ENCODE measurements at regions of chr4 and their contacts with region 1.

Region 1: DNA sequence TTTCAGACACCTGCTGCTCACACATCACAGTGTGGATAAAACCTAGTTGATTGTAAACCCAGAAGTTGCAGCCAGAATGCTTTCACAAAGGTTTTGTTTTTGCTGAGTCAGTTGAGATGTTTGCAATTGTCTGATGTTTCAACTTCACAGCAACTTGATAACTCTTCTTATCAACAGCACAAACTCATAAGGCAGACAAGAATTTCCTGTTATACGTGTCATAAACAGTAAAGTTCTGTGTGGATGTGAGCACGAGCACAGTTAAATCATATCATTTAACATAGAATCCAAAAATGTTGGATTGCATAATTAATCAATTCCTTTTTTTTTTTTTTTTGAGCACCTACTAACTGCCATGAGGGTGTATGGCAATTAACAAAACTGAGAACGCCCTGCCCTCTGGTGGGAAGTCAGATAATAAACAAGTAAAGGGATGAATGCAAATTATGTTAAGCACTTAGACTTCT is 512.2 kb downstream of the PDHA2 start:
- DNase-seq: peak; percentile 77
- H3K4me3 ChIP-seq: no peak overlapping the region
- H3K27ac ChIP-seq: peak overlapping the region; percentile 62
- H3K4me1 ChIP-seq: peaks cover 30% of the 10 kb centered on the region
- H3K27me3 ChIP-seq: no peaks in the 10 kb centered on the region
- CTCF ChIP-seq: peak; percentile 13 to 21
- POLR2A ChIP-seq: no peak

Region 2: GRCh38 chr4:95165926-95166524 is 1186.1 kb before region 1 on chr4:
- CTCF ChIA-PET with region 1: interaction called, 13 read pairs
- POLR2A ChIA-PET with region 1: no interaction called
- dilution Hi-C with region 1: no loop called
- intact Hi-C with region 1: loop called (anchors 1 kb)
- DNase-seq: peak; percentile 74
- H3K4me3 ChIP-seq: no peak overlapping the region
- H3K27ac ChIP-seq: no peak overlapping the region
- H3K4me1 ChIP-seq: no peaks in the 10 kb centered on the region
- H3K27me3 ChIP-seq: no peaks in the 10 kb centered on the region
- CTCF ChIP-seq: peak; percentile 31
- POLR2A ChIP-seq: no peak

Region 3: DNA sequence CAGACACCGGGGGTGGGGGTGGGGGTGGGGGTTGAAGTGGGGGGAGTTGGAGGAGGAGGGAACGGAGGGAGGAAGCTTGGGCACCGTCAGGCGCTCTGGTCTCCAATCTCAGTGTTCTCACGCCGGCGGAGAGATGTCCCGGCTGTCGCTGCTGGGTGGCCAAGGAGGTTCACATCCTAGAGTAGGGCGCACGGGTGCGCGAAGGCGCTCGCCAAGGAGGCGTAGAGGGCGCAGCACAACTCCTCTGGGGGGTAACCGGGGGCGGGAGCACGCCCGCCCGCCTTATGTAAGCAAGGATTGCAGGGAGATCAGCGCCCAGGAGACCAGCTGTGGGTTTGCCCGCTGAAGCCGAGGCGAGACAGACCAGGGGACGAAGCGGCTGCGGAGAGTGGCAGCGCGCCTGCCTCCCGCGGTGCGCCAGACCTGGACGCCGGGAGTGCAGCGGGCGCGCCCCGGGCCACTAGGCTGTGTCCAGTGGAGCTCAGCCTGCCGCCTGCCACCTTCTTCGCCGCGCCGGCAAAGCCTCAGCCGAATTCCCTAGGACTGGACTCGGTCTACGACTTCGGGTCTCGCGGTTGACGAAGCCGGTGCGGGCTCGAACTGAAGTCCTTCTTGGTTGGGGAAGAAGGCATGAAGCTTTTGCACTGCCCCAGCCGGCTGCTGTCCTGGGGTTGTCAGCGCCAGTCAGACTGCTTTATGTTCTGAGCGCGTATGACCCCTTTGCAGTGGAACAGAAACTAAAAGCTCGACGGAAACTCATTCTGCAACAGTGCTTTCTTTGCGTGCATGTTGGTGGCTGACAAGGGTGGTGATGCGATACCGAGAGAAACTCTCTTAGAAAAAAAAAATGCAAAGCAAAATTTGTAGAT is 802.6 kb before region 1 on chr4:
- CTCF ChIA-PET with region 1: no interaction called
- POLR2A ChIA-PET with region 1: no interaction called
- dilution Hi-C with region 1: no loop called
- intact Hi-C with region 1: loop called (anchors 10 kb)
- DNase-seq: peak; percentile 41
- H3K4me3 ChIP-seq: peak overlapping the region; percentile 55 to 88 (median 82)
- H3K27ac ChIP-seq: no peak overlapping the region
- H3K4me1 ChIP-seq: peaks cover 20% of the 10 kb centered on the region
- H3K27me3 ChIP-seq: peaks cover 38 to 42% of the 10 kb centered on the region in 2 experiments
- CTCF ChIP-seq: no peak
- POLR2A ChIP-seq: no peak

Region 4: GRCh38 chr4:95693594-95693993 is 658.5 kb before region 1 on chr4:
- CTCF ChIA-PET with region 1: interaction called, 14 read pairs
- POLR2A ChIA-PET with region 1: no interaction called
- dilution Hi-C with region 1: no loop called
- intact Hi-C with region 1: loop called (anchors 1 kb)
- DNase-seq: peak; percentile 36
- H3K4me3 ChIP-seq: no peak overlapping the region
- H3K27ac ChIP-seq: peak overlapping the region; percentile 88
- H3K4me1 ChIP-seq: peaks cover 14% of the 10 kb centered on the region
- H3K27me3 ChIP-seq: no peaks in the 10 kb centered on the region
- CTCF ChIP-seq: peak in 1 of 2 donors; percentile 16
- POLR2A ChIP-seq: no peak

Region 5: DNA sequence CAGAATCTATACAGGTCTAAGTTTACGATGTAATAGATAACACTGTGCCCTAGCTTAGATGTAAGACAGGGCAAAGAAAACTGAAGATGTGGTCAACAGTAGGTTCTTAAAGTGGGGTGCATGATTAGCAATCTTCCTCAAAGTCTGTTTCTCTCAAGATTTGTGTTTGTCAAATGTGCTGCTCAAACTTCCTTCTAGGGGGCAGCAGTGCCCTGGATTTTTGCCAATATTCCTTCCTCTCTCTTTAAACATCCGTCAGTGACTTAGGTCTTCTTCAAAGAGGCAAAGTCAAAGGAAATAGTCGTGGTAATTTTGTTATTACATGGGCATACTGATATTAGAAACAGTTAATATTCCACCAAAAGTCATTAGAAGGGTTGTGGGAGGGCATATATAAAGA is 516.4 kb before region 1 on chr4:
- CTCF ChIA-PET with region 1: no interaction called
- POLR2A ChIA-PET with region 1: no interaction called
- dilution Hi-C with region 1: no loop called
- intact Hi-C with region 1: loop called (anchors 5 kb)
- DNase-seq: peak; percentile 21
- H3K4me3 ChIP-seq: no peak overlapping the region
- H3K27ac ChIP-seq: no peak overlapping the region
- H3K4me1 ChIP-seq: no peaks in the 10 kb centered on the region
- H3K27me3 ChIP-seq: no peaks in the 10 kb centered on the region
- CTCF ChIP-seq: no peak
- POLR2A ChIP-seq: no peak

Region 6: GRCh38 chr4:96240041-96240440 is 112.0 kb before region 1 on chr4:
- CTCF ChIA-PET with region 1: no interaction called
- POLR2A ChIA-PET with region 1: no interaction called
- dilution Hi-C with region 1: no loop called
- intact Hi-C with region 1: no loop called
- DNase-seq: no peak
- H3K4me3 ChIP-seq: no peak overlapping the region
- H3K27ac ChIP-seq: no peak overlapping the region
- H3K4me1 ChIP-seq: no peaks in the 10 kb centered on the region
- H3K27me3 ChIP-seq: no peaks in the 10 kb centered on the region
- CTCF ChIP-seq: no peak
- POLR2A ChIP-seq: no peak

Region 7: DNA sequence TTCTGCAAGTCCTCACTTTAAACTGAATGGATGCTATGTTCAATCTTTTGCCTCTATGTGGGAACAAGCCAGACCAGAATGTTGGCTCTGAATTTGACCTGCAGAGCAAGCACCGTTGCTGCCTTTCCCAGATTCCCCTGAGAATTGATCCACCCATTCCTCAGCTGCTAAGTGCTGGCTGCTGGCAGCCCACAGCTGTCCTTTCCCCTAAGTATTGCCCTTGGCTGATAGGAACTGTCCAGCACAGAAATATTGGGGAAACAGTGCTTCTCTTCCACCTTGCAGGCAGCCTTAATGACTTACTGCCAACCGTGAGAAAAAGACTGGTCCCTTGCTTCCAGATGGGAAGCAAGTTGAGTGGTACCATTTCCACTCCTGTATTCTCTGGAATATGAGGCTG is 36.3 kb before region 1 on chr4:
- CTCF ChIA-PET with region 1: no interaction called
- POLR2A ChIA-PET with region 1: no interaction called
- dilution Hi-C with region 1: no loop called
- intact Hi-C with region 1: no loop called
- DNase-seq: peak; percentile 14
- H3K4me3 ChIP-seq: no peak overlapping the region
- H3K27ac ChIP-seq: no peak overlapping the region
- H3K4me1 ChIP-seq: no peaks in the 10 kb centered on the region
- H3K27me3 ChIP-seq: no peaks in the 10 kb centered on the region
- CTCF ChIP-seq: no peak
- POLR2A ChIP-seq: no peak

Region 8: DNA sequence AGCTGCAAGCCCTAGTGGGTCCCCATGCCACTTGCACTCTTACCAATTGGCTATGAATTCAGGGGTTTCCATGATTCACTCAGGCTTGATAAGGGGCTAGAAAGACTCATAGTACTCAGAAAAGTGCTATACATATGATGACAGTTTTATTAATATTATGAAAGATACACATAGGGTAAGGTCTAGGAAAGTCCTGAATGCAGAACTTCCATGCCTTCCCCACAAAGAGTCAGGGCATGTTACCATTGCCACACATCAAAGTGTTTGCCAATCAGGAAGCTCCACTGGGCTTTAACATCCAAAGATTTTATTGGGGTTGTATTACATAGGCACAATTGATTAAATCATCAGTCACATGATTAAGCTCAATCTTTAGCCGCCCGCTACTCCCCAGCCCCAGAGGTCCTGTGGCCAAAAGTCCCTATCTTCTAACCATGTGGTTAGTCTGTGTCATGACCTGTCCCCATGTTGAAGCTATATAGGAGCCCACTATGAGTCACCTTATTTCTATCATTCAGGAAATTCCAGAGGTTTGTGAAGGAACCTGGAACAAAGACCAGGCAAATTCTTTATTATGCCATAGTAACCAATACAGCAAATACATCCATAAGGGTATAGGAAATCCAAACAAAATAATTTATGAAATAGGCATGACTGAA is 1155.6 kb after region 1 on chr4:
- CTCF ChIA-PET with region 1: no interaction called
- POLR2A ChIA-PET with region 1: no interaction called
- dilution Hi-C with region 1: no loop called
- intact Hi-C with region 1: loop called (anchors 5 kb)
- DNase-seq: peak; percentile 63
- H3K4me3 ChIP-seq: no peak overlapping the region
- H3K27ac ChIP-seq: peak overlapping the region; percentile 63
- H3K4me1 ChIP-seq: peaks cover 12% of the 10 kb centered on the region
- H3K27me3 ChIP-seq: no peaks in the 10 kb centered on the region
- CTCF ChIP-seq: no peak
- POLR2A ChIP-seq: no peak

Region 9: DNA sequence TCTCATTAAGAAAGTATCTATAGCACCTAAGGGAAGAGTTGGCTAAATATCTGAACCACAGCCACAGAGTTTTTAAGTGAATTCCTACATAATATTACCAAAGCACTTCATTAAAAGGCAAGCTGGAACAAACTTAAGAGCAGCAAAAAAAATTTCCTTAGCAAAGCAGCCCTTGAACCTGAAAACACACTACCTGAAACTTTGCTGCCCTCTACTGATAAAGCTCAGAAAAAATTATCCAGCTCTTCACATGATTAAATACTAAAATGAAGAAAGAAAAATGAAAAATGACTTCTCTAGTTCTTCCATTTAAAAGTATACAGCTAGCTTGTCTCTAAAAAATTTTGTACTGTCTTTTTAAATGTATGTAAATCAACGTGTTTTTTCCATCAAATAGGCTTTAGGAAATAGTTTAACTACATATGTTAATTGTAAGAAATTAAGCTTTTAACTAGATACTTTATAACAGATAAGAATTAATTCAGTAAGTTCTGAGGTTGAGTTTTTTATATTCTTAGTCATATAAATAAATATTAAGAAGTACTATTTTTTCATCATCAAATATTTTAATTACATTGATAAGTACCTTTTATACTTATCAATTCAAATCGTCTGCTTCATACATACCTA is 1635.0 kb after region 1 on chr4:
- CTCF ChIA-PET with region 1: interaction called, 10 read pairs
- POLR2A ChIA-PET with region 1: no interaction called
- dilution Hi-C with region 1: no loop called
- intact Hi-C with region 1: no loop called
- DNase-seq: peak; percentile 71
- H3K4me3 ChIP-seq: no peak overlapping the region
- H3K27ac ChIP-seq: no peak overlapping the region
- H3K4me1 ChIP-seq: no peaks in the 10 kb centered on the region
- H3K27me3 ChIP-seq: no peaks in the 10 kb centered on the region
- CTCF ChIP-seq: peak; percentile 33 to 48
- POLR2A ChIP-seq: no peak

Measured in endothelial cell of umbilical vein (primary cell).